ENCODE measurements at regions of chr14 and their contacts with region 1.

Region 1: GRCh38 chr14:96100161-96101029 is 61.2 kb downstream of the C14orf132 start:
- DNase-seq: peak; percentile 79

Region 2: GRCh38 chr14:95998656-95999055 is 101.7 kb before region 1 on chr14:
- CTCF ChIA-PET with region 1: interaction called, 13 read pairs
- POLR2A ChIA-PET with region 1: no interaction called
- DNase-seq: no peak

Region 3: GRCh38 chr14:96162741-96163140 is 62.3 kb after region 1 on chr14:
- CTCF ChIA-PET with region 1: no interaction called
- POLR2A ChIA-PET with region 1: no interaction called
- DNase-seq: no peak

Region 4: GRCh38 chr14:96275177-96276112 is 175.1 kb after region 1 on chr14:
- CTCF ChIA-PET with region 1: interaction called, 35 read pairs
- POLR2A ChIA-PET with region 1: no interaction called
- DNase-seq: peak; percentile 76